ENCODE measurements at regions of chr5 and their contacts with region 1.

Region 1: GRCh38 chr5:175534070-175534932 is 55.9 kb downstream of the SFXN1 start:
- DNase-seq: peak; percentile 88
- H3K4me3 ChIP-seq: no peak overlapping the region
- H3K27ac ChIP-seq: no peak overlapping the region
- H3K4me1 ChIP-seq: peaks cover 8% of the 10 kb centered on the region
- H3K27me3 ChIP-seq: peaks cover 4% of the 10 kb centered on the region
- CTCF ChIP-seq: peak; percentile 98

Region 2: GRCh38 chr5:174724491-174725260 is 809.6 kb before region 1 on chr5 and contains the start of gene MSX2:
- CTCF ChIA-PET with region 1: no interaction called
- POLR2A ChIA-PET with region 1: no interaction called
- intact Hi-C with region 1: no loop called
- DNase-seq: peak; percentile 82
- H3K4me3 ChIP-seq: peak within 1 kb of the TSS; percentile 46
- H3K27ac ChIP-seq: no peak within 1 kb of the TSS
- H3K4me1 ChIP-seq: no peaks in the 10 kb centered on the region
- H3K27me3 ChIP-seq: peaks cover 99% of the 10 kb centered on the region
- CTCF ChIP-seq: no peak
- total RNA-seq, gene MSX2: not detected in 2 replicates

Region 3: GRCh38 chr5:175427762-175428161 is 106.5 kb before region 1 on chr5:
- CTCF ChIA-PET with region 1: no interaction called
- POLR2A ChIA-PET with region 1: no interaction called
- intact Hi-C with region 1: no loop called
- DNase-seq: no peak
- H3K4me3 ChIP-seq: no peak overlapping the region
- H3K27ac ChIP-seq: no peak overlapping the region
- H3K4me1 ChIP-seq: no peaks in the 10 kb centered on the region
- H3K27me3 ChIP-seq: peaks cover 4% of the 10 kb centered on the region
- CTCF ChIP-seq: no peak

Region 4: GRCh38 chr5:175617447-175617846 is 83.1 kb after region 1 on chr5:
- CTCF ChIA-PET with region 1: no interaction called
- POLR2A ChIA-PET with region 1: no interaction called
- intact Hi-C with region 1: no loop called
- DNase-seq: no peak
- H3K4me3 ChIP-seq: no peak overlapping the region
- H3K27ac ChIP-seq: no peak overlapping the region
- H3K4me1 ChIP-seq: no peaks in the 10 kb centered on the region
- H3K27me3 ChIP-seq: peaks cover 6% of the 10 kb centered on the region
- CTCF ChIP-seq: no peak

Region 5: GRCh38 chr5:175696139-175696854 is 162.0 kb after region 1 on chr5:
- CTCF ChIA-PET with region 1: interaction called, 6 read pairs
- POLR2A ChIA-PET with region 1: no interaction called
- intact Hi-C with region 1: loop called (anchors 2 kb)
- DNase-seq: peak; percentile 68
- H3K4me3 ChIP-seq: no peak overlapping the region
- H3K27ac ChIP-seq: no peak overlapping the region
- H3K4me1 ChIP-seq: no peaks in the 10 kb centered on the region
- H3K27me3 ChIP-seq: no peaks in the 10 kb centered on the region
- CTCF ChIP-seq: peak; percentile 75

Region 6: GRCh38 chr5:175718401-175719108 is 184.3 kb after region 1 on chr5:
- CTCF ChIA-PET with region 1: interaction called, 6 read pairs
- POLR2A ChIA-PET with region 1: no interaction called
- intact Hi-C with region 1: loop called (anchors 2 kb)
- DNase-seq: peak; percentile 37
- H3K4me3 ChIP-seq: no peak overlapping the region
- H3K27ac ChIP-seq: no peak overlapping the region
- H3K4me1 ChIP-seq: no peaks in the 10 kb centered on the region
- H3K27me3 ChIP-seq: peaks cover 6% of the 10 kb centered on the region
- CTCF ChIP-seq: peak; percentile 68